ENCODE measurements at regions of chr11 and their contacts with region 1.

Region 1: DNA sequence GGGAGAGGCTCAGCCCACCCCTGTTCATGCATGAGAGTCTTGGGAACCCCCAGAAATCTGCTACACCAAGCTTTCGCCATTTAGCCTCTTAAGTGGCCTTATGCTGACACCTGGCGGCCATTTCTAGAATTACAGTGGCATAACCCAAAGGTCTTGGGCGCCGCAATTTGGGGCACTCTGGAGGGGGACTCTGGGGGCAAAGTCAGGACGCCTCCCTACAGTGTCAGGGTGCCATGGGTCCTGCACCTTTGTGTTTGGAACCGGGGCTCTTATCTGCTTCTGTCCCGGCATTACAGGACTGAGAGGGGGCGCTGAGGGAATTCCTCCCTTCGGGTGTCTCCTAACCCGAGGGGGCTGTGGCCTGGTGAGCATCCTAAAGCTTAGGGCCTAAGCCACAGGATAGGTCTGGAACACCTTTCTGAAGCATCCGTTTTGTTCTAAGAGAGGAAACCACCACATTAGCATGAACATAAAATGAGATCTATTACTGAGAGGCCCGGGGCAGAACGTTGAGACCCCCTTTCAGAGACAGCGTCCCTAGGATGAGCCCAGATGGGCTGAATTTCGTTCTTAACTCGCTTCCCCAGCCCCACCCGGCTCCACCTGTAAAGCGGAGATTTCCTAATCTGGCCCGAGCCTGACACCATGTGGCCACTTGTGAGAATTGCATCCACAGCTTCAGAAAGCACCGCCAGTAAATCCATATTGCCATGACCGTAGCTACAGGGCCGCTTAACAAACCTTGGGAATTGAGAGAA is 9.3 kb downstream of the INS start:
- DNase-seq: peak; percentile 83
- H3K4me3 ChIP-seq: no peak overlapping the region
- H3K27ac ChIP-seq: no peak overlapping the region
- H3K4me1 ChIP-seq: no peaks in the 10 kb centered on the region
- H3K27me3 ChIP-seq: peaks cover 15% of the 10 kb centered on the region
- CTCF ChIP-seq: peak; percentile 66

Region 2: GRCh38 chr11:1652771-1653540 is 498.7 kb before region 1 on chr11:
- intact Hi-C with region 1: loop called (anchors 5 kb)
- DNase-seq: peak; percentile 78
- H3K4me3 ChIP-seq: no peak overlapping the region
- H3K27ac ChIP-seq: no peak overlapping the region
- H3K4me1 ChIP-seq: no peaks in the 10 kb centered on the region
- H3K27me3 ChIP-seq: no peaks in the 10 kb centered on the region
- CTCF ChIP-seq: peak; percentile 98

Region 3: GRCh38 chr11:1694064-1694845 is 457.4 kb before region 1 on chr11:
- intact Hi-C with region 1: loop called (anchors 5 kb)
- DNase-seq: peak; percentile 90
- H3K4me3 ChIP-seq: peak overlapping the region; percentile 11
- H3K27ac ChIP-seq: no peak overlapping the region
- H3K4me1 ChIP-seq: peaks cover 5% of the 10 kb centered on the region
- H3K27me3 ChIP-seq: peaks cover 4% of the 10 kb centered on the region
- CTCF ChIP-seq: peak; percentile 97

Region 4: DNA sequence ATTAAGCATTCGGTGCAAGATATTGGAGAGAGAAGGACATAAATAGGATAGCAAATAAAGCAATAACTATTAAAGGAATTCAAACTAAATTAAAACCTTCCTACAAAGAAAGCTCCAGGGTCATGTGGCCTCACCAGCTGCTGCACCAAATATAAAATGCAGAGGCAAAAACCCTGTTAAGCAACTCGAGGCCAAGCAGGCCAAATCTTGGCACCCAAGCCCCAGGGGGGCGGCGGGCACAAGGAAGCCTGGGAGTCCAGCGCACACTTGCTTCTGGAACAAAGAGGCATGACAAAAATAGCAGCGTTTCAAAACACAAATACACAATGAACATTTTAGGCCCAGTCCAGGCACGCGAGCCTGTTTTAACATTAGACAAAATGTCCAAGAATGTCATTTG is 433.9 kb before region 1 on chr11:
- intact Hi-C with region 1: no loop called
- DNase-seq: no peak
- H3K4me3 ChIP-seq: no peak overlapping the region
- H3K27ac ChIP-seq: no peak overlapping the region
- H3K4me1 ChIP-seq: no peaks in the 10 kb centered on the region
- H3K27me3 ChIP-seq: no peaks in the 10 kb centered on the region
- CTCF ChIP-seq: no peak

Region 5: GRCh38 chr11:1837171-1838076 is 314.3 kb before region 1 on chr11:
- intact Hi-C with region 1: loop called (anchors 5 kb)
- DNase-seq: peak; percentile 64
- H3K4me3 ChIP-seq: no peak overlapping the region
- H3K27ac ChIP-seq: no peak overlapping the region
- H3K4me1 ChIP-seq: peaks cover 14% of the 10 kb centered on the region
- H3K27me3 ChIP-seq: no peaks in the 10 kb centered on the region
- CTCF ChIP-seq: peak; percentile 88

Region 6: DNA sequence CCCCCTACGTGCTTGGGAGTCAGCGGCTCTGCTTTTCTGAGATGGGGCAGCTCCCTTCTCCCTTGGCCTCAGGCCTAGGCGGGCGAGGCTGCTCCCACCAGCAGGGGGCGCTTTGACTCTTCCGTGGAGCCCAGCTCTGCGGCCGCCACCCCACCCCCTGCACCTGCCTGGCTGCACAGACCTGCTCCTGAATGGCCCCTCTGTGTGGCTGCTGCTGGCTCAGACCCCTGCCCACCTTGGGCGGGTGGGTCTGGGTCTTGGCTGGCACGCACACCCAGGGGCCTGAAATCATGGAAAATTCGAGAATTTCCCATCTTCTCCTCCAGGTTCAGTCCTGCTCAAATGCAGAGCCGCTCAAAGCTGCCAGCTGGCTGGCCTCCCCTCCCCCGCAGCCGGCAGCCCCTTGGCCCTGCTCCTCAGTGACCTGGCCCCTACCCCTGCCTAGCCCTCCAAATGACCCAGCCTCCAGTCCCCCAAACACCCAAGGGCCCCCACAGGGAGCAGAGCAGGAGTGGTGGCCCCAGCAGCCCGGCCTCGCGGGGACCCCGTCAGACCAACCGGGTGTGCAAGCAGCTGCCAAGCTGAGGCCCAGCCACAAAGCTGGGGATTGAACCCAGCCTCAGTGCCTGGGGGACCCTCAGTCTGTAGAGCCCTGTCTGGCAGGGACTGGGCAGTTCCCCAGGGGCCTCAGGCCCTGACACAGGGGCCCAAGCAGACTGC is 269.0 kb before region 1 on chr11:
- intact Hi-C with region 1: loop called (anchors 5 kb)
- DNase-seq: peak; percentile 81
- H3K4me3 ChIP-seq: no peak overlapping the region
- H3K27ac ChIP-seq: peak overlapping the region; percentile 22
- H3K4me1 ChIP-seq: no peaks in the 10 kb centered on the region
- H3K27me3 ChIP-seq: no peaks in the 10 kb centered on the region
- CTCF ChIP-seq: peak; percentile 89